G401 (cell line): ENCODE measurements at regions of chr3 and their contacts with region 1.

Region 1: GRCh38 chr3:138206196-138206595 is 19.1 kb downstream of the ARMC8 start:
- DNase-seq: peak; percentile 94

Region 2: DNA sequence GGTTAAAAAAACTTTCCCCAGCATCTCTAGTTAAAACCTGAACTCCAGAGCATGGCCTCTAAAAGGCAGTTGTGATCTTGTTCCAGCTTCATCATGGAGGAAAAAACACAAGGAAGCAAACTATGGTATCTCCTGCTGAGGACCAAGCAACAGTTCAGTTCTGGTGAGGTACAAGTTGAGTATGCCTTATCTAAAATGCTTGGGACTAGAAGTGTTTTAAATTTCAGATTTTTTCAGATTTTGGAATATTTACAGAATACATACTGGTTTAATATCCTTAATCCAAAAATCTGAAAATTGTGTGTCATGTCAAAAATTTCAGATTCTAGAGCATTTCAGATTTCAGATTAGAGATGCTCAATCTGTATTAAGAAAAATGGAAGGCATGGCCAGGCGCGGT is 41.1 kb before region 1 on chr3:
- in situ Hi-C with region 1: no loop called
- DNase-seq: no peak

Region 3: DNA sequence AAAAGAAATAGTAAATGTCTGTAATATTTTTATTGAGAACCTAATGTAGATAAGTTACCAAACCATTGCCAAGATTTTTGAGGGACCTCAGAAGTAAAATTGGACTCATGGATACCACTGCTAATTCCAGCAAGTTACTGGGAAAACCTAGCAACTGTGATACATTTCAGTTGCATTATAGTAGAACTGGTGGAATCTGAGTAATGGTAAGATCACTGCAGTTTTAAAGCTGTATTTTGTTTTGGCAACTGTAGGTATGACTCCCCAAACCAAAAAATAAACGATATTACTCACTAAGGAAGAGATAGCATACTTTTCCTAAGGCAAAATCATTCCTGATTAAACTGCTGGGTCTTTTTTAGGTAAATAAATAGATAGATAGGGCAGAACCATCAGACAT is 34.9 kb after region 1 on chr3:
- in situ Hi-C with region 1: loop called (anchors 5 kb)
- DNase-seq: no peak